A673 (cell line): ENCODE measurements at regions of chr7 and their contacts with region 1.

Region 1: DNA sequence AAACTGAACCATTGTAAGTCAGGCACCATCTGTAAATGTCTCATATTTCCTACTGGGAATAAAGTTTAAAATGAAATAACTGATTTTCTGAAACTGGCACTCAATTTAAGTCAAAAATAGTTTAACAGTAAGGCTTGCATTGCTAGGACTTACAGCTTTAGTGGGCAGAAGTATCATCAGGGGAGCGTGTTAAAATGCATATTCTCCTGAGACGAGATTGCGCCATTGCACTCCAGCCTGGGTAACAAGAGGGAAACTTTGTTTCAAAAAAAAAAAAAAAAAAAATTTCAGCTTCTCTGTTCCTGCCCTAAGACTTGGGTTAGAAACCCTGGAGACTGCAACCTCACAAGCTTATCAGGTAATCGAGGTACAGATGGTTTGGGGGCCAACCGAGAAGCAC is 65.4 kb downstream of the UBE3C start:
- DNase-seq: no peak
- H3K4me3 ChIP-seq: no peak overlapping the region
- H3K27ac ChIP-seq: no peak overlapping the region
- H3K4me1 ChIP-seq: peaks cover 17% of the 10 kb centered on the region
- H3K27me3 ChIP-seq: no peaks in the 10 kb centered on the region
- CTCF ChIP-seq: no peak

Region 2: DNA sequence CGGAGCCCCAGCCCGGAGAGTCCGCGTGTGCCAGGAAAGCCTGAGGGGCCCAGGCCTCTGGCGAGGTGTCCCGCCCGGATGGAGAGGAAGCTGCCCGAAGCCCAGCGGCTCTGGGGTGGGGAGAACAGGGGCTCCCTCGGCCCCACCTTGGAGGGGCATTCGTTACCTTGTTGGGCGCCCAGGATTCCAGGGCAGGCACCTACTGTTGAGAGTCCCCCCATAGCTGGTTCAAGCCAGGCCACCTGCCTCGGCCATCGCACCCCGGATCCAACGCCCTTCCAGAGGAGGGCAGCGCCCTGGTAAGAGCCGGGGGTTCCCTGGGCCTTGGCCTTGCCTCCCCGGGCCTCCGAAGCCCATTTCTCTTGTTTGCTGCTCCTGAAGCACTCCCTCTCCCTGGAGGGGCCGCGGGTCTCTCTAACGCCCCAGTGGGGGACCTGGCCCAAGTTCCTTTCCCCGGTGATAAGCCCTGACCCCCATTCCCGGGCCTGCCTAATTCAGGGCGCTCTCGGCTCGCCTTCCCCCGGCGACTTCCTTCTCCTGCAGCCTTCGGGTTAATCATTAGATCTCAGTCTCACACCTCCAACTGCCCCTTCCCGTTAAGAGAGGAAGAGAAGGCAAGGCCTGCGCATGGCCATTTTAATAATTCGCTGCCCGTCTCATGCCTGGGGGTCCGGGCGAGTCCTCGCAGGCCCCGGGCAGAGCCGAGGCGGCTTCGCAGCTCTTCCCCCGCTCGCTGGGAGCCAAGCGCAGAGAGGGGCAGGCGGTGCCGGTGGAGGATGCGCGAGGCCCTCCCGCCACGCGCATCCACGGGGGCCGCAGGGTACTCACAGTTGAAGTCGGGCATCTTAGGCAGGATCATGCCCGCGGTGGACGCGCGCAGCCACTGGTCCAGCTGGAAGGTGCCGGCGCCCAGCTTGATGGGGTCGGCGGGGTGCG is 195.0 kb before region 1 on chr7:
- CTCF ChIA-PET with region 1: no interaction called
- POLR2A ChIA-PET with region 1: no interaction called
- intact Hi-C with region 1: no loop called
- DNase-seq: no peak
- H3K4me3 ChIP-seq: peak overlapping the region; percentile 24
- H3K27ac ChIP-seq: no peak overlapping the region
- H3K4me1 ChIP-seq: peaks cover 7% of the 10 kb centered on the region
- H3K27me3 ChIP-seq: peaks cover 97% of the 10 kb centered on the region
- CTCF ChIP-seq: no peak

Region 3: DNA sequence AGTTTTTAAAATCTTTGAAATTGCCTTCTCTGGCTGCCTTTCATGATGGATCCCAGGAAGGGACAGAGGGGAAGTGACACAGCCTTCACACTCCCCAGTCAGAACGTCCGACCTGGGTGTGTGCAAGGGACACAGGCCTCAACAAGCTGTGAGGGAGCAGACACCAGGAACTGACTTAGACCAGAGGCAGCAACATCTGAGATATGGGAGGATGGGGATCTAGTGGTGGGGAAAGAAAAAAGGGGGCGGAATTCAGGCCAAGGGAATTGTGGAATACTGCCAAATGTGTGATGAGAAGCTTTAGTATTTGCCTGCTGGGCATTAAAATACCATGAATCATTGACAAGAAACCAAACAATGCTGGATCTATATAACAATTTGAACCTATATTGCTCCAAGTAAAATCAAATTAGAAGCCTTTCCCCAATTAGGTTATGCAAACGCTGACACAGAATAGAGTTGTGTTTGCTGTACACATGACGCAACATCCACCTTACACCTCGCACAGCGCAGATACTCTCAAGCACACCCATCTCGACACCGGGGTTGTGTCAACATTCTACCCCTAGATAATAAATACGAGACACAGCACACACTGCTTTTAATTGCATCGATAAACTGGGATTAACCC is 176.5 kb before region 1 on chr7:
- CTCF ChIA-PET with region 1: no interaction called
- POLR2A ChIA-PET with region 1: interaction called, 11 read pairs
- intact Hi-C with region 1: no loop called
- DNase-seq: no peak
- H3K4me3 ChIP-seq: no peak overlapping the region
- H3K27ac ChIP-seq: no peak overlapping the region
- H3K4me1 ChIP-seq: no peaks in the 10 kb centered on the region
- H3K27me3 ChIP-seq: peaks cover 83% of the 10 kb centered on the region
- CTCF ChIP-seq: no peak